Activated CD4-positive, alpha-beta memory T cell treated with anti-CD3 and anti-CD28 coated beads, Interleukin-2, amount 10 ng/mL, durations not matched to agents 7 days and 5 days (primary cell): ENCODE measurements at regions of chr19 and their contacts with region 1.

Region 1: GRCh38 chr19:10870955-10871603 is at the start of gene CARM1:
- DNase-seq: peak; percentile 100
- H3K4me3 Mint-ChIP-seq: peak within 1 kb of the TSS; percentile 78
- H3K27ac Mint-ChIP-seq: peak within 1 kb of the TSS; percentile 73
- H3K4me1 Mint-ChIP-seq: peaks cover 33% of the 10 kb centered on the region
- H3K27me3 Mint-ChIP-seq: no peaks in the 10 kb centered on the region
- total RNA-seq, gene CARM1: 39.3 to 40.2 TPM

Region 2: DNA sequence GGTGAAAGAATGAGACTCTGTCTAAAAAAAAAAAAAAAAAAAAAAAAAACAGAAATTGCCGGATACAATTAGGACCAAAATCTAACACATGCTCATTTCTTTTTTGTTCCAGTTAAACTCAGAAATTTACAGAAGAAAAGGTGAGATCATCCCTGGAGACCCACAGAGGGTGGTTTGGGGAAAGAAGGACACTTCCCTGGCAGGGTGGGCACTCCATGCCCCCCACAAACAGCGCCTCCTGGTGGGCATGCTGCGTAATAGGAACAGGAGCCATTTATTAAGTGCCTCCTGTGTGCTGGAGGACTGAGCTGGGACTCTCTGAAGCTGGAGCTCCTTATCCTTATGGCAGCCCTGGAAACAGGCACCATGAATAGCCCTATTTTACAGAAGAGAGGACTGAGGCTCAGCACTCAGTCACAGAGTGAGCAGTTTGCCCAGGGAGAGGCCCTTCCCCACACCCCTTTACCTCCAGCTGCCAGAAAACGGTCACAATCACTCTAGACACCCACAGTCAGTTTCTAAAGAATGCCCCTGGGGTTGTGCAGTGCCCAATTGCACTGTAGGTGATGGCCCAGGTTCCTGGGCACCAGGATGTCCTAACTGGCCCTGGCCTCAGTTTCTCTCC is 12.8 kb before region 1 on chr19:
- CTCF ChIA-PET with region 1: interaction called, 24 read pairs
- POLR2A ChIA-PET with region 1: no interaction called
- DNase-seq: peak; percentile 37
- H3K4me3 Mint-ChIP-seq: no peak overlapping the region
- H3K27ac Mint-ChIP-seq: no peak overlapping the region
- H3K4me1 Mint-ChIP-seq: peaks cover 7% of the 10 kb centered on the region
- H3K27me3 Mint-ChIP-seq: no peaks in the 10 kb centered on the region